ENCODE measurements at regions of chr19 and their contacts with region 1.

Region 1: GRCh38 chr19:45902651-45903625 is 525 bp upstream of the MYPOP start:
- DNase-seq: peak; percentile 98 to 100 (median 99)
- ATAC-seq: peak; percentile 95 to 97 (median 96)
- H3K4me3 ChIP-seq: peak overlapping the region; percentile 52 to 84 (median 77)
- H3K27ac ChIP-seq: peak overlapping the region; percentile 63 to 88 (median 79)
- H3K4me1 ChIP-seq: peaks cover 3 to 26% (median 16%) of the 10 kb centered on the region in 12 donors
- H3K27me3 ChIP-seq: no peaks in the 10 kb centered on the region
- CTCF ChIP-seq: peak in 1 of 12 donors; percentile 9
- POLR2A ChIP-seq: peak in 1 of 2 donors; percentile 78

Region 2: GRCh38 chr19:45848922-45849321 is 54.0 kb before region 1 on chr19:
- intact Hi-C with region 1: no loop called
- DNase-seq: peak in 1 of 5 donors; percentile 16
- ATAC-seq: no peak
- H3K4me3 ChIP-seq: no peak overlapping the region
- H3K27ac ChIP-seq: no peak overlapping the region
- H3K4me1 ChIP-seq: no peaks in the 10 kb centered on the region
- H3K27me3 ChIP-seq: no peaks in the 10 kb centered on the region
- CTCF ChIP-seq: peak in 1 of 12 donors; percentile 8
- POLR2A ChIP-seq: no peak

Region 3: GRCh38 chr19:45886427-45887199 is 16.3 kb before region 1 on chr19:
- intact Hi-C with region 1: loop called in 2 of 10 experiments (anchors 2 kb)
- DNase-seq: peak; percentile 92 to 94 (median 94)
- ATAC-seq: peak; percentile 89 to 97 (median 94)
- H3K4me3 ChIP-seq: peak overlapping the region; percentile 52 to 93 (median 80)
- H3K27ac ChIP-seq: peak overlapping the region; percentile 75 to 95 (median 92)
- H3K4me1 ChIP-seq: peaks cover 11 to 50% (median 33%) of the 10 kb centered on the region in 12 donors
- H3K27me3 ChIP-seq: no peaks in the 10 kb centered on the region
- CTCF ChIP-seq: no peak
- POLR2A ChIP-seq: peak; percentile 10 to 73

Region 4: GRCh38 chr19:45927565-45928261 is 24.8 kb after region 1 on chr19:
- intact Hi-C with region 1: loop called in 1 of 10 experiments (anchors 2 kb)
- DNase-seq: peak; percentile 87 to 93 (median 91)
- ATAC-seq: peak; percentile 82 to 94 (median 94)
- H3K4me3 ChIP-seq: peak overlapping the region in 1 of 12 donors; percentile 19
- H3K27ac ChIP-seq: no peak overlapping the region
- H3K4me1 ChIP-seq: peaks cover 0 to 9% (median 3%) of the 10 kb centered on the region in 12 donors
- H3K27me3 ChIP-seq: peaks cover 0 to 5% (median 0%) of the 10 kb centered on the region in 9 donors
- CTCF ChIP-seq: peak in 2 of 12 donors; percentile 8 to 26
- POLR2A ChIP-seq: no peak

Region 5: GRCh38 chr19:45960595-45961235 is 57.8 kb after region 1 on chr19:
- intact Hi-C with region 1: no loop called
- DNase-seq: no peak
- ATAC-seq: no peak
- H3K4me3 ChIP-seq: no peak overlapping the region
- H3K27ac ChIP-seq: peak overlapping the region in 9 of 12 donors; percentile 6 to 83 (median 48)
- H3K4me1 ChIP-seq: peaks cover 0 to 43% (median 22%) of the 10 kb centered on the region in 12 donors
- H3K27me3 ChIP-seq: peaks cover 0 to 24% (median 5%) of the 10 kb centered on the region in 9 donors
- CTCF ChIP-seq: no peak
- POLR2A ChIP-seq: no peak

Region 6: DNA sequence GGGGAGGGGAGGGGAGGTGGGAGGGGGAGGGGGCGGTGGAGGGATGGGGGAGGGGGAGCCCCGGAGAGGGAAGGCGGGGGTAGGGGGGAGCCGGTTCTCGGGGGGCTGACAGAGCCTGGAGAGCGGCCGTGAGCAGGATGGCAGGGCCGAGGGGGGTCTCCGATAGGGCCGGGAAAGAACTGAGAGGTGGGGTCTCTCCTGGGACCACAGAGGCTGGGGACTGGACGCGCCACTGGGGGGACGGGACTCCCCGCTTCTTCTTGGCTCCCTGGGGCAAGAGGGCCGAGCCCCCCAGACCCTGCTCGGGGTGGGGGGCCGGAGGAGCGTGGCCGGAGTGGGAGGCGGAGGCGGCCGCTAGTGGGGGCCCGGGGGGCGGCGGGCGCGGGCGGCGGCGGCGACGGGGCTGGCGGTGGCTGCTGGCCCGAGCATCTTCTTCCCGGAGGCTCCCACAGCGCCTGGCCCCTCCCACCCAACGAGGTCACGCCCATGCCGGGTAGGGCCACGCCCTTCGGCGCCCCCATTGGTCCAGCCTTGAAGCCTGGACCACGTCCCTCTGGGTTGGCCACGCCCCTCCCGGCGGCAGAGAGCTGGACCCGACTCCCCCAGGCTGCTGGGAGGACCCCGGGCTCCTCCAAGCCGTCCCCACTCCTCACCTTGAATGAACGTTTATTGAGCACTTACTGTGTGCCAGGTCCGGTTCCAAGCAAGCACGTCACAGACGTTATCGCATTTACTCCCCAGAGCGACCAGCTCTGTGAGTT is 70.8 kb after region 1 on chr19 and contains the start of gene NOVA2:
- intact Hi-C with region 1: no loop called
- DNase-seq: peak; percentile 80 to 90 (median 82)
- ATAC-seq: peak; percentile 70 to 83 (median 77)
- H3K4me3 ChIP-seq: peak within 1 kb of the TSS; percentile 32 to 68 (median 60)
- H3K27ac ChIP-seq: peak within 1 kb of the TSS; percentile 67 to 92 (median 82)
- H3K4me1 ChIP-seq: peaks cover 0 to 28% (median 6%) of the 10 kb centered on the region in 12 donors
- H3K27me3 ChIP-seq: peaks cover 8 to 60% (median 43%) of the 10 kb centered on the region in 9 donors
- CTCF ChIP-seq: peak in 1 of 12 donors; percentile 8
- POLR2A ChIP-seq: peak in 1 of 2 donors; percentile 69
- total RNA-seq, gene NOVA2: 2.2 to 10.0 (median 4.8) TPM

Region 7: GRCh38 chr19:45994989-45995714 is 92.2 kb after region 1 on chr19 and contains the start of gene CCDC61:
- intact Hi-C with region 1: loop called in 1 of 10 experiments (anchors 2 kb)
- DNase-seq: peak; percentile 94 to 96 (median 95)
- ATAC-seq: peak; percentile 99
- H3K4me3 ChIP-seq: peak within 1 kb of the TSS; percentile 61 to 91 (median 76)
- H3K27ac ChIP-seq: peak within 1 kb of the TSS in 11 of 12 donors; percentile 64 to 89 (median 76)
- H3K4me1 ChIP-seq: peaks cover 3 to 20% (median 13%) of the 10 kb centered on the region in 12 donors
- H3K27me3 ChIP-seq: peaks cover 0 to 12% (median 0%) of the 10 kb centered on the region in 9 donors
- CTCF ChIP-seq: no peak
- POLR2A ChIP-seq: peak in 1 of 2 donors; percentile 94
- total RNA-seq, gene CCDC61: 4.1 to 13.7 (median 7.1) TPM

Region 8: GRCh38 chr19:46009530-46010510 is 106.9 kb after region 1 on chr19:
- intact Hi-C with region 1: loop called in 2 of 10 experiments (anchors 5 kb)
- DNase-seq: peak; percentile 52 to 80 (median 62)
- ATAC-seq: peak; percentile 31 to 87 (median 80)
- H3K4me3 ChIP-seq: no peak overlapping the region
- H3K27ac ChIP-seq: no peak overlapping the region
- H3K4me1 ChIP-seq: peaks cover 0 to 6% (median 1%) of the 10 kb centered on the region in 12 donors
- H3K27me3 ChIP-seq: peaks cover 0 to 32% (median 7%) of the 10 kb centered on the region in 9 donors
- CTCF ChIP-seq: peak; percentile 73 to 92 (median 85)
- POLR2A ChIP-seq: no peak

Region 9: DNA sequence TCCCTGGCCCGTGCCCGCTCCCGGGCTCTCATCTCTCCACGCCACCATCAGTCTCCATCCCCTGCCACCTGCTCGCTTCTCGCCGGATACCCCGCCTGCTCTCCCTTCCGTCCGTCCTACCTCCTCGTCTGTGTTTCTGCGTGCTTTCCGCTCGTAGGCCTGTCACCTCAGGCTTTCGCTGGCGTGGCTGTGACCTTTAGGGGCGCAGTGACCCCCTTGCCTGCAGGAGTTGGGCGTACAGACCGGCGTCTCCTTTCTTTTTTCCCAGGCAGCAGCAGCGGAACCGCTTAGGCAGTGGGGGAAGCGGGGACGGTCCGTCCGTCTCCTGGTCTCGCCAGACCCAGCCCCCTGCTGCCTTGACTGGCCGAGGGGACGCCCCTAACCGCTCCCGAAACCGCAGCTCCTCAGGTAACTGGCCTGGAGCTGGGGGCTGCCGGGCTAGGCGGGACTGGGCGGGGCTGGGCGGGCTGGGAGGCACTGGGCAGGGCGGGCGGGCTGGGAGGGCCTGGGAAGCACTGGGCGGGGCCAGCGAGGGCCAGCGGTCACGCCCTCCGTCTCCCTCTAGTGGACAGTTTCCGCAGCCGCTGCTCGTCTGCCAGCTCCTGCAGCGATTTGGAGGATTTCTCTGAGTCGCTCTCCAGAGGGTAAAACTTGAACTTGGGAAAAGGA is 113.6 kb after region 1 on chr19:
- intact Hi-C with region 1: loop called in 1 of 10 experiments (anchors 5 kb)
- DNase-seq: peak; percentile 79 to 89 (median 83)
- ATAC-seq: peak; percentile 81 to 92 (median 86)
- H3K4me3 ChIP-seq: peak overlapping the region; percentile 44 to 91 (median 72)
- H3K27ac ChIP-seq: peak overlapping the region in 2 of 12 donors; percentile 33 to 51
- H3K4me1 ChIP-seq: peaks cover 0 to 28% (median 13%) of the 10 kb centered on the region in 12 donors
- H3K27me3 ChIP-seq: peaks cover 0 to 38% (median 14%) of the 10 kb centered on the region in 9 donors
- CTCF ChIP-seq: peak; percentile 82 to 98 (median 90)
- POLR2A ChIP-seq: no peak

Measured in heart left ventricle (tissue), 16 donors.